HEK293 (cell line): ENCODE measurements at regions of chr17 and their contacts with region 1.

Region 1: DNA sequence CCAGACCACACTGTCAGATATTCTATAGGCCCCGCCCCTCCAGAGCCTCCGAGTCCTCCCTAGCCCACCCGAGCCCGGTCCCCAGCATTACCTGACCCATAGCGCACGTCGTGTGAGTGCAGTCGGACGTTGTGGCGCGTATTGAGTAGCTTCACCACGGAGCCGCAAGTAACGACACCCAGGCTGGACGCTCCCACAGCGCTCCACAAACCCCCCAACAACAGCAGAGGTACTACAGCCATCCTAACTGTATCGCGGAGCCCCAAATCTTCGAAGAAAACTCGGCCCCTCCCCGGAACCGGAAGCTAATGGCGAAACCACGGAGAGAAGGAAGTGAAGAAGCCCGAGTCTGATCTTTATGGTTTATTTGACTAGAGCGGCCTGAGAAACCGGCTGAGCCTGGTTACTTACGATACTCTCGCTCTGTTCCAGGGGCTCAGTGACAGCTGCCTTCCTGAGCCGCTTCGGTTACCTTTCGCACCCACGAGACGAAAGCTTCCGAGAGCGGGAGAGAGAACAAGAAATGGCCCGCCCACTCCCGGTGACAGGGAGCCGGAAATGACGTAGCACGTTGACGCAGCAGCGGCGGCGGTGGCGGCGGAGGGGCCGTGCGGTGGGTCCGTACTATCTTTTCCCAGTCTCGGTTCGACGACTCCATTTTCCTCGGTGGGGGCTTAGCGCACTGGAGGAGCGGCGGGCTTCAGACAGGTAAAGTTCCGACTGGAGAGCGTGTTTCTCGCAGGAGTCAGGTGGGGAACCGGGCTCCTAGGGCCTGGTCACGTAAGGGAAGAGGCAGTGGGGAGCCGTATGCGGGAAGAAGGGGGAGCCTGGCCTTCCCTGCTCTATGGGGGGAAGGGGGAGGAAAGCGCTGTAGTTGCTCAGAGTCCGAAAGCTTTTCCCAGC is at the starts of genes SDF2 and SUPT6H:
- H3K4me3 ChIP-seq: peak within 1 kb of the TSS; percentile 78
- H3K27ac ChIP-seq: peak within 1 kb of the TSS; percentile 81
- H3K4me1 ChIP-seq: peaks cover 7% of the 10 kb centered on the region
- CTCF ChIP-seq: peak; percentile 8; the same call in 1 of the 2 replicates

Region 2: DNA sequence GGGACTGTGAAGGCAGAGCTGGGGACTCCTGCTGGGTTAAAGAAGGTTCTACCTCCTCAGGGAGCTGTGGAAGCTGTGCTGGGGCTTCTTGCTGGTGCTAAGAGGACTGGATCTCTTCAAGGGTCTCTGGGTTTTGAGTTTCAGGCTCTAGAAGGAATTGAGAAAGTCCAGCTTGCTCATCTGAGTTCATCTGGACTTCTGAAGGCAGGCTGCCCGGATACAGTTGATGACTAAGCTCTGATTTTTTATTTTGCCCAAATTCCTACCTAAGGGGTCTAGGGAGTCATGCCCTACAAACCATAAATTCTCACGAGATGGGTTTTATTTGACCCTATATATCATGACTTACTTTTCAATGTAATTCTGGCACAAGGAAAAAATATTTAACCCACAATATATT is 389.7 kb before region 1 on chr17:
- CTCF ChIA-PET with region 1: no interaction called
- POLR2A ChIA-PET with region 1: no interaction called
- H3K4me3 ChIP-seq: no peak overlapping the region
- H3K27ac ChIP-seq: no peak overlapping the region
- H3K4me1 ChIP-seq: no peaks in the 10 kb centered on the region
- CTCF ChIP-seq: no peak

Region 3: GRCh38 chr17:28675980-28676379 is 14.1 kb after region 1 on chr17:
- CTCF ChIA-PET with region 1: interaction called, 8 read pairs
- POLR2A ChIA-PET with region 1: interaction called, 13 read pairs
- H3K4me3 ChIP-seq: no peak overlapping the region
- H3K27ac ChIP-seq: no peak overlapping the region
- H3K4me1 ChIP-seq: no peaks in the 10 kb centered on the region
- CTCF ChIP-seq: no peak

Region 4: DNA sequence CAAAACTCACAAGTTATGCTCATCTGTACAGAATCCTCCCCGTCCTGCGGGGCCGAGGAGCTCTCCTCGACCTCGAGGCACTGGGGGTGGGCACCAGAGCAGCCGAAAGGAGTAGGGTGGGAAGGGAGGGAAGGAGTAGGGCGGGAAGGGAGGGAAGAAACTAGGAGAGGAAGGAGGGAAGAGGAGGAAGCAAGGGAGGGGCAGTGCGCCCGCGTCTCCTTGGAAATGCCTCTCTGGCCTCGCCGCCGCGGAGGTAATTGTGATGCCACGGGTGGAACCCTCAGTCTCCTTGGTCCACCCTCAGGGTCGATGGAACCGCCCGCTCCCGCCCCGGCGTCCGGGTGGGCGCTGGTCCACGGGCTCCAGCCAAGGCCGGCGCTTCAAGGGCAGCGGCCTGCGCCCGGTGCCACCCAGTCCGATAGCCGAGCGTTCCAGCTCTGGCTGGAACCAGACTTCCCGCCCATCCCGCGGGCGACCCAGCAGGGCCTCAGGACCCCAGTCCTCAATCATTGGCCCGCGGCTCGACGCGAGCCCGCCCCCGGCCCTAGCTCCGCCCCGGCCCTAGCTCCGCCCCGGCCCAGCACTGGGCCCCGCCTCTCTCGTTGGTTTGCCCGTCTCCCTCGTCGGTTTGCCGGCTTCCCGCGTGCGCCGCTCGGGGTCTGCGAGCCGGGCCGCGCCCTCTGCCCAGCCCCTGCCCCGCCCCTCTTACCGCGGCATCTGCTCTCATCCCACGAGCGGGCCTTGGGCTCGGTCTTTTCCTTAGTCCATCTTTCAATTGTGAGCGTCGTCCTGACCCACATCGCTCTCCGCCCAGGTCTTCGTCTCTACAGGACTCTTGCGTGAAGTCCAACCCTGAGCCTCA is 49.2 kb after region 1 on chr17:
- CTCF ChIA-PET with region 1: interaction called, 3 read pairs
- POLR2A ChIA-PET with region 1: interaction called, 12 read pairs
- H3K4me3 ChIP-seq: peak overlapping the region; percentile 51
- H3K27ac ChIP-seq: peak overlapping the region; percentile 89
- H3K4me1 ChIP-seq: peaks cover 3% of the 10 kb centered on the region
- CTCF ChIP-seq: no peak